PC-3 (cell line): ENCODE measurements at regions of chr3 and their contacts with region 1.

Region 1: DNA sequence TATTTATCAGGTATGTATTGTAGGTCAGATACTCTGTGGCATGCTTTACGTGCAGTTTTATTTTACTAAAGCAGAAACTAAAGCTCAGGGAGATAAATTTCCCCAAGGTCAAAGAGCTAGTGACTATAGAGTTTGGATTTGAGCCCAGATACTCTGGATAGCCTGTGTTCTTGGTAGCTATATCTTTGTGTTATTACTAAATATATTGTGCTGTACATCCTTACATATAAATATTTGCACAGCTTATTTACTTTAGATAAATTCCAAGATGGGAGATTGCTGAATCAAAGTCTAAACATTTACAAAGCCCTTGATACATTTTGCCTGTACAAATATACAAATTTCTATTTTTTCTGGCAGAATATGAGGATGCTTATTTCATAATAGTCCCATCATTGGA is 660.9 kb upstream of the NAALADL2 start:
- DNase-seq: peak; percentile 92
- ATAC-seq: peak; percentile 86
- H3K4me3 ChIP-seq: 0 out of 2 replicates have a peak overlapping the region, but pooled peaks have one; percentile 19
- H3K27ac ChIP-seq: peak overlapping the region; percentile 25; the same call in 1 of the 2 replicates
- H3K4me1 ChIP-seq: peaks cover 43% of the 10 kb centered on the region
- H3K27me3 ChIP-seq: no peaks in the 10 kb centered on the region
- CTCF ChIP-seq: no peak

Region 2: GRCh38 chr3:174153871-174154270 is 44.3 kb before region 1 on chr3:
- CTCF ChIA-PET with region 1: no interaction called
- POLR2A ChIA-PET with region 1: no interaction called
- intact Hi-C with region 1: loop called (anchors 2 kb)
- DNase-seq: peak; percentile 74
- ATAC-seq: peak; percentile 85
- H3K4me3 ChIP-seq: no peak overlapping the region
- H3K27ac ChIP-seq: no peak overlapping the region
- H3K4me1 ChIP-seq: peaks cover 7% of the 10 kb centered on the region
- H3K27me3 ChIP-seq: no peaks in the 10 kb centered on the region
- CTCF ChIP-seq: no peak

Region 3: DNA sequence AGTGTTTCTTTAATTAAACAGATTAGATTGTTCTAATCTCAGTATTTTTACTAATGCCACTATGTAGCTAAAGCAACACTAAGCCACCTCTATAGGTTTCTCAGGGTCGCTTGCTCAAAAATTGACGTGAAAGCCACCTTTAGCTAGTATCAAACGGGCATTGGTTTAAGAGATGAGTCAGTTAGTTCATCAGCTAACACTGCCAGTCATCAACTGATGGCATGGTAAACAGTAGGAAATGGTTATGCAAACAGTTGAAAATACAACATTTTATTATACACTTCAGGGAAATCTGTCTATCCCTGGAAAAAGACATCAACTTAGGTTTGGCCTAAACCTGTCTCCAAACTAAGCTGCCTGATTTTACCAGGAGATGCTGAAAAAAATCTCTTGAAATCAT is 78.6 kb after region 1 on chr3:
- CTCF ChIA-PET with region 1: no interaction called
- POLR2A ChIA-PET with region 1: no interaction called
- intact Hi-C with region 1: loop called (anchors 5 kb)
- DNase-seq: peak; percentile 41
- ATAC-seq: peak; percentile 97
- H3K4me3 ChIP-seq: no peak overlapping the region
- H3K27ac ChIP-seq: 0 out of 2 replicates have a peak overlapping the region, but pooled peaks have one; percentile 5
- H3K4me1 ChIP-seq: peaks cover 8% of the 10 kb centered on the region
- H3K27me3 ChIP-seq: no peaks in the 10 kb centered on the region
- CTCF ChIP-seq: no peak

Region 4: DNA sequence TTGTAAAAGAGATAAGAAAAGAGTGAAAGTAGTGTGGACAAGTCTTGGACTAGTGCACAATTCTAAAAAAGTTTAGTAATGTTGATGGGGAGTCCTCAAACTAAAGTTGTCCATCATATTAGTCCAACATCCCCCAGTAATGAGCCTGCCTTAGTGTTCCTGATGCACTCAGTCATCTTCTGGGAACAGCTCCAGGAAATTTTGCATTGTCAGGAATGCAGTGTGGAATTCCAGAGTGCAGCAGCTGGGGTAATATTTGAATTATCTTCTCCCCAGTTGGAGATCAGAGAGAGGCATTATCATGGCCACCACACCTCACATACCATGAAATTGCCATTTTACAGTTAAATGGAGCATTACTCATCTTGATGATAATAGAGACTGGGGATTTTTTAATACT is 132.1 kb after region 1 on chr3:
- CTCF ChIA-PET with region 1: no interaction called
- POLR2A ChIA-PET with region 1: no interaction called
- intact Hi-C with region 1: loop called (anchors 5 kb)
- DNase-seq: peak; percentile 91
- ATAC-seq: peak; percentile 49
- H3K4me3 ChIP-seq: no peak overlapping the region
- H3K27ac ChIP-seq: no peak overlapping the region
- H3K4me1 ChIP-seq: peaks cover 44% of the 10 kb centered on the region
- H3K27me3 ChIP-seq: no peaks in the 10 kb centered on the region
- CTCF ChIP-seq: no peak